Right lobe of liver (tissue), 6 donors: ENCODE measurements at regions of chr1 and their contacts with region 1.

Region 1: DNA sequence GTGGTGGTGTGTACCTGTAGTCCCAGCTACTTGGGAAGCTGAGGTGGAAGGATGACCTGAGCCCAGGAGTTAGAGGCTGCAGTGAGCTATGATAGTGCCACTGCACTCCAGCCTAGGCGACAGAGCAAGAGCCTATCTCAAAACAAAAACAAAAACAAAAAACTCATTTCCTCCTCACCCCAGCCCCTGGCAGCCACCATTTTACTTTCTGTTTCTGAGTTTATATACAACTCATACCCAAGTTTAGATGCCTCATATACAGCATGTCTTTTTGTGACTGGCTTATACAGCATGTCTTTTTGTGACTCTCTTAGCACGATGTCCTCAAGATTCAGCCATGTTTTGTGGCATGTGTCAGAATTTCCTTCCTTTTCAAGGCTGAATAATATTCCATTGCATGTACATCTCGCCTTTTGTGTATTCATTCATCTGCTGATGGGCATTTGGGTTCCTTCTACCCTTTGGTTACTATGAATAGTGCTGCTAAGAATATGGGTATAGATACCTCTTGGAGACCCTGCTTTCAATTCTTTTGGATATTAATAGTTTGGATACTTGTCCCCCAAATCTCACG is 14.7 kb downstream of the COA7 start:
- DNase-seq: peak in 1 of 3 donors; percentile 14
- ATAC-seq: no peak
- H3K4me3 ChIP-seq: no peak overlapping the region
- H3K27ac ChIP-seq: no peak overlapping the region
- H3K4me1 ChIP-seq: peaks cover 0 to 14% (median 4%) of the 10 kb centered on the region in 4 donors
- H3K27me3 ChIP-seq: no peaks in the 10 kb centered on the region
- CTCF ChIP-seq: no peak
- POLR2A ChIP-seq: no peak

Region 2: DNA sequence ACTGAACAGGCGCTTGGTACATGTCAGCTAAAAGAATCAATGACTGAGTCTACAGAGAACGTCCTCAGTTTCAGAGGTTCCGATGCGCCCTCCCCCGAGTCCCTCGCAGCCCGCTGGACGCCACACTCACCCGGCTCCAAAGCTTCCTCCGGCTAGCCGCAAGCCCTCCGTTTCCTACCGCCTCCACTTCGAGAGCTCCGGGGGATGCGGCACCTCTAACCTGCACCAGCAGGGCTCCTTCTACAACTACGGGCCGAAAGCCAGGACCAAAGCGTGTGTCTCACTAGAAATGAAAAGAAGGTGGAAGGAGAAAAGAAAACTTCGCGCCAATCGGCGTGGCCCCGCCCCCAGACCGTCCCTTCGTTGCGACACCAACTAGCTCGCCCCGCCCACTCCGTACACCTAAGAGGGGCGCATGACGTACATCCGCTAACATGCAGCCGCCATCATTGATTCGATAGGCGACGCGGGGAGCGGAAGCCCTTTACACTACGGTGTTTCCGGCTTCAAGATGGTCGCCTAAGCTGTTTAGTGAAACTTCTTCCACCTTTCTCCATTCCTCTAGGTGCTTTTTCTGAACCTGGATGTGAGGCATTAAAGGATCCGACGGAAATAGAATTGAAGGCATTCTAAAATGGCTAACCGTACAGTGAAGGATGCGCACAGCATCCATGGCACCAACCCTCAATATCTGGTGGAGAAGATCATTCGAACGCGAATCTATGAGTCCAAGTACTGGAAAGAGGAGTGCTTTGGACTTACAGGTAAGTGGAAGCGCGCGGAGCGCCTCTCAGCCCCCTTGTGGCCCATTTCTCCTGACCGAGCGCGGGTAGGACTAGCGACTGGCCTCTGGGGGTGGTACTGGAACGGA is 279.1 kb before region 1 on chr1 and contains the starts of genes ORC1 and PRPF38A:
- intact Hi-C with region 1: loop called in 1 of 2 experiments (anchors 10 kb)
- DNase-seq: peak; percentile 97 to 98 (median 97)
- ATAC-seq: peak; percentile 98 to 99 (median 99)
- H3K4me3 ChIP-seq: peak within 1 kb of the TSS; percentile 84 to 89 (median 85)
- H3K27ac ChIP-seq: peak within 1 kb of the TSS; percentile 79 to 87 (median 81)
- H3K4me1 ChIP-seq: peaks cover 0 to 26% (median 4%) of the 10 kb centered on the region in 4 donors
- H3K27me3 ChIP-seq: no peaks in the 10 kb centered on the region
- CTCF ChIP-seq: peak; percentile 31 to 49 (median 36)
- POLR2A ChIP-seq: no peak
- total RNA-seq, gene ORC1: 0.11 to 4.0 (median 0.45) TPM
- total RNA-seq, gene PRPF38A: 4.5 to 14.4 (median 11.4) TPM

Region 3: GRCh38 chr1:52641307-52641706 is 42.1 kb before region 1 on chr1:
- intact Hi-C with region 1: no loop called
- DNase-seq: no peak
- ATAC-seq: no peak
- H3K4me3 ChIP-seq: no peak overlapping the region
- H3K27ac ChIP-seq: no peak overlapping the region
- H3K4me1 ChIP-seq: no peaks in the 10 kb centered on the region
- H3K27me3 ChIP-seq: no peaks in the 10 kb centered on the region
- CTCF ChIP-seq: no peak
- POLR2A ChIP-seq: no peak

Region 4: DNA sequence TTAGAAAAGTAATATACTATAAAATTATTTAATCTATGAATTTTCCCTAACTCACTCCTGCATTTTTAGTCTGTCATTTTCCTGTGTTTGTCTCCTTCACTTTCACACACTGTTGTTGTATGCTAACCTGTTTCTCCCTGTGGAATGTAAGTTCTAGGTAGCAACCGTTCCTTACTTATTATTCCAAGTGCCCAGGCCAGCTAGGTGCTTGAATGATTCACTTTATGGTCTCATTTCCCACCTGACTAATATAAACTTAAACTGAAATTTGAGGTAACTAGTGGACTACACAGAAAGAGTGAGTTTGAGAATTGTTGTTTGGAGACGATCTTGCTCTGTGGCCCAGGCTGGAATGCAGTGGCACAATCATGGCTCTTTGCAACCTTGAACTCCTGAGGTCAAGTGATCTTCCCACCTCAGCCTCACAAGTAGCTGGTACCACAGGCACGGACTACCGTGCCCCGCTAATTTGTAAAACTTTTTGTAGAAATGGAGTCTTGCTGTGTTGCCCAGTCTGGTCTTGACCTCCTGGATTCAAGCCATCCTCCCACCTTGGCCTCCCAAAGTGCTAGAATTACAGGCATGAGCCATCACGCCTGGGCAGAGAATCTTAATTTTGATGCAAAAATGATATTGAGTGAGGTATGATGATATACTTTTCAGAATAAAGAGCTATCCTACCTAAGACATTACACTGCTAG is 44.7 kb after region 1 on chr1:
- intact Hi-C with region 1: no loop called
- DNase-seq: peak in 1 of 3 donors; percentile 19
- ATAC-seq: no peak
- H3K4me3 ChIP-seq: peak overlapping the region in 2 of 3 donors; percentile 81 to 97
- H3K27ac ChIP-seq: peak overlapping the region in 2 of 3 donors; percentile 91
- H3K4me1 ChIP-seq: peaks cover 0 to 15% (median 4%) of the 10 kb centered on the region in 4 donors
- H3K27me3 ChIP-seq: no peaks in the 10 kb centered on the region
- CTCF ChIP-seq: no peak
- POLR2A ChIP-seq: no peak